Posterior vena cava (tissue), 2 donors: ENCODE measurements at regions of chr1 and their contacts with region 1.

Region 1: DNA sequence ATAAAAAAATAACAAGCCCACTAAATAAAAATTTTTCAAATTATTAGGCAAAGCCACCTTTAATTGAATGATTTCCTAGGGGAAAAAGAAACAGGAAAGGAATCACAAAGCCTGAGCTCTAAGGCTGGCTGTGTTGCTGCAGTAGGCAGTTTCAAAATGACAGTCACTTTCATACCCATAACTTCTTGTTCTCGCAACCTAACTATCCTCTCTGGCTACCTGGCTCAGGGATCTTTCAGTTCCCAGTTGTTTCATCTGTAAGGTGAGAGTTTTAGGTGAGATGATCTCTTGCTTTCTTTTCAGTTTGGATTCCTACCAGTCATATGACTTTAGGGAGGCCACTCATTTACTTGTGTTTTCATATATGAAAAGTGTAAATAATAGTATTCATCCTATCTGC is 226.1 kb downstream of the ASTN1 start:
- DNase-seq: no peak

Region 2: GRCh38 chr1:176773038-176773437 is 165.3 kb before region 1 on chr1:
- intact Hi-C with region 1: no loop called
- DNase-seq: no peak

Region 3: DNA sequence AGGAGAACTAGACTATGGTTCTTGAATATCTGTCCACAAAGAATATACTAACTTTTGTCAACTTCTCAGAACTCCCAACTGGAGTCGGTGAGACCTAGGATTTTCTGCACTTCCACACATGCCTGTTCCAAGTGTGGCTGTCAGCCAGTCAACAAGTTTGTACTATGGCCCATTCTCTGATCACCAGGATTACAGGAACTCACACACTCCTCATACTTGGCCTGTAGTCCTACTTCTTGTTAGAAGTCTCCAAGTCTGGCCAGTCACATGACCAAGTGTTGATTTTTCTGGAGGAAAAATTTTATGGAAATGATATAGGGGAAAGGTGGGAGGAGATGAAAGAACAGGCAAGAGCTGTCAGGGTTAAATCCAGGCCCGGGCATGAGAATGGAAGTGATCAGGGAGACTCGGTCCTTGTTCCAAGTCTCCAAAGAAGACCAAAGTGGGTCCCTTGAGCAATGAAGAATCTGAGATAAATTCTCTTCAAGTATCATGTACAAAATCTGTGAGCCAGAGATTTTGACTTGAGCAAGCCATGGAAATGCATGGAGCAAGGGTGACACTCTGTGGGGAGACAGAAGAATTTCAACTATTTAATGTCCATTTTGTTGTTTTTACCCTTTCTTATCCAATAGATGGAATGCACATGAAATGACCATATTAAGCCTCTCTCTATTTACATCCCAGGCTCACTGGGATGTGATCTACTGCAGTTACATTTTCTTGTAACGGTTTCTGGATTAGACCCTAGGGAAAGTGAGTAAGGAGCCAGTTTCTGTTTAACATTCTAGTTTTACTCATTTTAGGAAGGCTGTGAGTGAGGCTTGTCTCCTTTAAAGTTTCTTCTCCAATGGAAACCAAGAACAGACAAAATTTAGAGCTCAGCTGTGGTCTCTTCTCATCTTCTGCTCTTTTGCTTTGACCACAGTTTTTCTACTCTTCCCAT is 94.8 kb before region 1 on chr1:
- intact Hi-C with region 1: no loop called
- DNase-seq: no peak

Region 4: DNA sequence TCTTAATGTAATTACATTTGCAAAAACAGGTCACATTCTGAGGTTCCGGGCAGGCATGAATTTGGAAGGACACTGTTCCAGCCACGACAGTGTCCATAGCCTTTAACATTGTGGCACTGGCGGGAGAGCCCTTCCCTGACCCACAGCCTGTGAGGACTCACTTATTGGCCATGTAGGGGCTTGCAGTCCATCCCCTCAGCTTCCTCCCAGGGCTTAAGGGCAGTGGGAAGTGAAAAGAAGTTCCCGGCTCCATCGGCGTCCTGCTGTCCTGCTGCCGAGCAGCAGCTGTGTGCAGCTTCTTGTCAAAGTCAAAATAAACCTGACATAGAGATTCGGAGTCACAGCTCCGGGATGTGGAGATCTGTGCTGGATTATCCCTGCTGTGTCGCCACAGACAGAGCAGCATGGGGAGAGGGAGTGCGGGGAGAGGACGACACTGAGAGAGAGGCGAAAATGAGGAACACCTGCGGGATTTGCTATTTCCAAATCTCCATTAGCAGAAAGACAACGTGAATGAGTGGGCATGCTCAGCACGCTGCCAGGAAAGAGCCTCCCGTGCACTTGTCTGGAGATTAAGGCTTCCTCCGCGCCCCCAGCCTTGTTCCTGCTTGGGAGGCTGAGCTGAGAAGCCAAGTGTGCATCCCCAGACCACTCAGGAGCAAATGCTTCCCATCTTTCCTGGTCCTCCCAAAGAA is 34.2 kb before region 1 on chr1:
- intact Hi-C with region 1: loop called in 1 of 2 experiments (anchors 1 kb)
- DNase-seq: no peak

Region 5: DNA sequence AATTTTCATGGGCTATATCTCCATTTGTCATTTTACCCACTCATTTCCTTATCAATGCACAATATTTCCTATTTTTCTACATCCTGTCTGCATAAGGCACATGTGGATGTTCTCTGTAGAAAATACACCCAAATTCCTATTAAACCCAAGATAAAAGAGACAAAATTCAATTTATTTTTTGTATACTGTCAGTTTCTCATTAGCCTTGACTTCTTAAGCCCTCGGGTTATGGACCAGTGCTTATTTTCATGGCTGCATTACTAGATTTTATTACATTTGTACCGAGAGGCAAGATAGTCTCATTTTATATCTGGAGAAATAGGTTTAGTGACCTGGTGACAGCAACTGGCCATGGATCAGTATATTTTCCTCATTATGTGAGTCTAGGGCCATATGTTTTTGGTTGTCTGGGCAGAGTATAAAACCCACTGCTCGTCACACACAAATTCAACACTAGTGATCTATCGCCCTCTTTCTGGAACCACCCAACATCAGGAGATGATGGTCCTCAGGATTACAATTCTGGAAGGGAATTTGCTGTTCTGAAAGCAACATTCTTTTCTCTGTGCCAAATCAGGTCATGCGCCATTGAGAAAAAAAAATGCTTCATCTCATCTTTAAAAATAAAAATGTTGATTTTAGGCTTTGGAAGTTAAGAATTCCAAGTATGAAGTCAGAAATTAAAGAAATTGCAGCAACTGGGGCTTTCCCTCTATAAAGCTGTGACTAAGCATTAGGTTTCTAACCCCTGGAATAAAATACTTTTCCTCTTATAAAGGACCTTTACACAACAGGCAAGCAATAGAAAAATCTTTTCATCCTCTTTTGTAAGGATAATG is 144.7 kb after region 1 on chr1:
- intact Hi-C with region 1: no loop called
- DNase-seq: no peak